ENCODE measurements at regions of chr11 and their contacts with region 1.

Region 1: DNA sequence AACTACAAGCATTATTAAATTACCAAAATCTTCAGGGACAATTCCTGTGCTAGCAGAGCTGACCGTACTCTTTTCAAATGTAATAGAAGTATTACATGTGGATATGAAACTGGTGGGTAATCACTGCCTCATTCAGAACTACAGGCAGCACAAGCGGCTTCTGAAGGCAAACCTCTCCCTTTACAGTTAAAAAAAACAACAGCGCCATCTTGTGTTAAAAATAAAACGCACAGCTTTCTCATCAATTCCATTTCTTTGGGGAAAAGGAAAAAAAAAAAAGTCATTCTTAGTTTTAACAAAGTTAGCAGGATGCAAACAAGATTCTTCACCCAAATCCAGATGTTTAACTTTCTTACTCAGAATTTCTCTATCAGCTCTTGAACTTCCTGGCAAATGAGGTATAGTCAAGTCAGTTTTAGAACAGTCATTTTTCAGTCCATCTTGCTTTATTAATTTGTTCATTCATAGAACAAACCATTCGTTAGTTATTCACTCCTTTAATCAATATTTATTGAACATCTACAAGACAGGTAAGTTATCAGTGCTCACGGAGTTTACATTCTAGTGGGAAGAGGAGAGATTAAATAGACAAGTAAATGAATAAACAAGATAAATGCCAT is 331.8 kb upstream of the MPPED2 start:
- DNase-seq: peak; percentile 24
- H3K4me3 Mint-ChIP-seq: no peak overlapping the region
- H3K27ac Mint-ChIP-seq: no peak overlapping the region
- H3K4me1 Mint-ChIP-seq: no peaks in the 10 kb centered on the region
- H3K27me3 Mint-ChIP-seq: peaks cover 36% of the 10 kb centered on the region
- CTCF ChIP-seq: peak; percentile 68

Region 2: GRCh38 chr11:30196400-30197206 is 721.4 kb before region 1 on chr11:
- CTCF ChIA-PET with region 1: no interaction called
- intact Hi-C with region 1: loop called (anchors 5 kb)
- DNase-seq: peak; percentile 67
- H3K4me3 Mint-ChIP-seq: no peak overlapping the region
- H3K27ac Mint-ChIP-seq: no peak overlapping the region
- H3K4me1 Mint-ChIP-seq: no peaks in the 10 kb centered on the region
- H3K27me3 Mint-ChIP-seq: no peaks in the 10 kb centered on the region
- CTCF ChIP-seq: peak; percentile 58

Region 3: DNA sequence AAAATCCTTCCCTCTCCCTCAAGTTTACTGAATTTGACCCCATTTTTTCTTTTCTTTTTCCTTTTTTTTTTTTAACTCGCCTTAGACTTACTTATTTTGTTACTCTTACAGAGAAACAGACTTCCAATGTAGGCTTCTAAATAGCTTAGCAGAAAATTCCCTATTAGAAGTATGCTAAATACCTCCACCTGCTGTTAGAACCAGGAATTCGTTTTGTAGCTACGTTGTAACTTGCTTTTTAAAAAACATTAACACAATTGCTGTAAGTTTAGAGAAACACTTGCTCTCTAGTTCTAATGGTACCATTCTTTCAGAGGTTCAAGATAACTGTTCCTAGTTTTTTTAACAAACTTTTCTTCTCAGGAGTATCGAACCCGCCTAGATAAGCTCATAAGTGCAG is 127.4 kb after region 1 on chr11:
- CTCF ChIA-PET with region 1: no interaction called
- intact Hi-C with region 1: no loop called
- DNase-seq: no peak
- H3K4me3 Mint-ChIP-seq: no peak overlapping the region
- H3K27ac Mint-ChIP-seq: no peak overlapping the region
- H3K4me1 Mint-ChIP-seq: no peaks in the 10 kb centered on the region
- H3K27me3 Mint-ChIP-seq: no peaks in the 10 kb centered on the region
- CTCF ChIP-seq: no peak

Region 4: GRCh38 chr11:31060880-31061279 is 142.9 kb after region 1 on chr11:
- CTCF ChIA-PET with region 1: no interaction called
- intact Hi-C with region 1: no loop called
- DNase-seq: no peak
- H3K4me3 Mint-ChIP-seq: no peak overlapping the region
- H3K27ac Mint-ChIP-seq: no peak overlapping the region
- H3K4me1 Mint-ChIP-seq: no peaks in the 10 kb centered on the region
- H3K27me3 Mint-ChIP-seq: no peaks in the 10 kb centered on the region
- CTCF ChIP-seq: no peak

Region 5: DNA sequence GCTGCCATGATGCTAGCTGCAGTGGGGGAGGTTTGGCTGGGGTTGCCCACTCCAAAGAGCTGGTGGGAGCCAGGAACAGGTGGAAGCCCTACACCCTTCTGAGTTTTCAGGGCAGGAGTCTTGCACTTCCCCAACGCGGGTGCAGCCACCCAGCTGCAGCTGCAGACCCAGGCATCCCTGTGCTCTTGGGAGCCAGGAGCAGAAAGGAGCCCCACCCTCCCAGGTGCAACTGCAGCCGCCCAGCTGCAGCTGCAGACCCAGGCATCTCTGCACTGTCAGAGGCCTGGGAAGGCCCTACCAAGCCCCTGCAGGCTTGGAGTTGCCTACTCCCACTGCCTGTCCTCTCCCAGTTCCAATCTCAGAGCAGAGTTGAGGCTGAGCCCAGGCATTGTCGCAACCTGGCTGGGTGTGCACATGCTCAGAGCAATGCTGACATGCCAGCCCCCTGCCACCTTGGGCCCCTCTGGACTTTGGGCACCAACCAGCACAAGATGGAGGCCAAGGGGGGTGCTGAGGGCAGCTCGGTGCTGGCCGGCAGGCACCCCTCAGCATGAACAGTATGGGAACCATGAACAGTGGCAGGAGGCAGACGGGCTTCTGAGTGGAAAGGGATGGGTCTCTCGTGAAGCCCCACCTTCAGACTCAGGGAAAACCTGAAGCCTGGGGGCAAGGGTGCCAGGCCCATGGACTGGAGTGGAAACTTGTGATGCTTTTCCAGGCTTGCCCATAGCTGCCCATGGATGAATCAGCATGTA is 256.1 kb after region 1 on chr11:
- CTCF ChIA-PET with region 1: no interaction called
- intact Hi-C with region 1: no loop called
- DNase-seq: no peak
- H3K4me3 Mint-ChIP-seq: no peak overlapping the region
- H3K27ac Mint-ChIP-seq: no peak overlapping the region
- H3K4me1 Mint-ChIP-seq: no peaks in the 10 kb centered on the region
- H3K27me3 Mint-ChIP-seq: no peaks in the 10 kb centered on the region
- CTCF ChIP-seq: no peak

Measured in Calu3 (cell line).